Breast epithelium (tissue), 4 donors: ENCODE measurements at regions of chr1 and their contacts with region 1.

Region 1: GRCh38 chr1:248102847-248103246 is 7.9 kb downstream of the OR2L13 start:
- DNase-seq: no peak
- H3K4me3 ChIP-seq: no peak overlapping the region
- H3K27ac ChIP-seq: no peak overlapping the region
- H3K4me1 ChIP-seq: no peaks in the 10 kb centered on the region
- H3K27me3 ChIP-seq: no peaks in the 10 kb centered on the region
- CTCF ChIP-seq: no peak
- POLR2A ChIP-seq: no peak

Region 2: GRCh38 chr1:247180581-247180980 is 922.3 kb before region 1 on chr1:
- intact Hi-C with region 1: loop called (anchors 10 kb)
- DNase-seq: no peak
- H3K4me3 ChIP-seq: no peak overlapping the region
- H3K27ac ChIP-seq: no peak overlapping the region
- H3K4me1 ChIP-seq: no peaks in the 10 kb centered on the region
- H3K27me3 ChIP-seq: no peaks in the 10 kb centered on the region
- CTCF ChIP-seq: no peak
- POLR2A ChIP-seq: no peak

Region 3: GRCh38 chr1:248065071-248065470 is 37.8 kb before region 1 on chr1:
- intact Hi-C with region 1: no loop called
- DNase-seq: no peak
- H3K4me3 ChIP-seq: no peak overlapping the region
- H3K27ac ChIP-seq: no peak overlapping the region
- H3K4me1 ChIP-seq: no peaks in the 10 kb centered on the region
- H3K27me3 ChIP-seq: no peaks in the 10 kb centered on the region
- CTCF ChIP-seq: no peak
- POLR2A ChIP-seq: no peak